Activated CD8-positive, alpha-beta T cell treated with anti-CD3 and anti-CD28 coated beads for 36 hours (primary cell): ENCODE measurements at regions of chr16 and their contacts with region 1.

Region 1: GRCh38 chr16:68116256-68116867 is 31.2 kb downstream of the NFATC3 start:
- DNase-seq: no peak
- ATAC-seq: peak; percentile 54
- H3K4me3 Mint-ChIP-seq: no peak overlapping the region
- H3K27ac Mint-ChIP-seq: peak overlapping the region; percentile 25
- H3K4me1 Mint-ChIP-seq: peaks cover 84% of the 10 kb centered on the region
- H3K27me3 Mint-ChIP-seq: no peaks in the 10 kb centered on the region
- CTCF ChIP-seq: peak; percentile 67

Region 2: GRCh38 chr16:68128577-68129305 is 12.4 kb after region 1 on chr16:
- CTCF ChIA-PET with region 1: interaction called, 10 read pairs
- POLR2A ChIA-PET with region 1: interaction called, 3 read pairs
- intact Hi-C with region 1: no loop called
- DNase-seq: no peak
- ATAC-seq: no peak
- H3K4me3 Mint-ChIP-seq: no peak overlapping the region
- H3K27ac Mint-ChIP-seq: peak overlapping the region; percentile 53
- H3K4me1 Mint-ChIP-seq: peaks cover 65% of the 10 kb centered on the region
- H3K27me3 Mint-ChIP-seq: no peaks in the 10 kb centered on the region
- CTCF ChIP-seq: no peak

Region 3: GRCh38 chr16:68229431-68230198 is 113.3 kb after region 1 on chr16:
- CTCF ChIA-PET with region 1: interaction called, 12 read pairs
- POLR2A ChIA-PET with region 1: no interaction called
- intact Hi-C with region 1: no loop called
- DNase-seq: peak; percentile 64
- ATAC-seq: no peak
- H3K4me3 Mint-ChIP-seq: no peak overlapping the region
- H3K27ac Mint-ChIP-seq: peak overlapping the region; percentile 75
- H3K4me1 Mint-ChIP-seq: peaks cover 50% of the 10 kb centered on the region
- H3K27me3 Mint-ChIP-seq: no peaks in the 10 kb centered on the region
- CTCF ChIP-seq: peak; percentile 88